ENCODE measurements at regions of chr10 and their contacts with region 1.

Region 1: DNA sequence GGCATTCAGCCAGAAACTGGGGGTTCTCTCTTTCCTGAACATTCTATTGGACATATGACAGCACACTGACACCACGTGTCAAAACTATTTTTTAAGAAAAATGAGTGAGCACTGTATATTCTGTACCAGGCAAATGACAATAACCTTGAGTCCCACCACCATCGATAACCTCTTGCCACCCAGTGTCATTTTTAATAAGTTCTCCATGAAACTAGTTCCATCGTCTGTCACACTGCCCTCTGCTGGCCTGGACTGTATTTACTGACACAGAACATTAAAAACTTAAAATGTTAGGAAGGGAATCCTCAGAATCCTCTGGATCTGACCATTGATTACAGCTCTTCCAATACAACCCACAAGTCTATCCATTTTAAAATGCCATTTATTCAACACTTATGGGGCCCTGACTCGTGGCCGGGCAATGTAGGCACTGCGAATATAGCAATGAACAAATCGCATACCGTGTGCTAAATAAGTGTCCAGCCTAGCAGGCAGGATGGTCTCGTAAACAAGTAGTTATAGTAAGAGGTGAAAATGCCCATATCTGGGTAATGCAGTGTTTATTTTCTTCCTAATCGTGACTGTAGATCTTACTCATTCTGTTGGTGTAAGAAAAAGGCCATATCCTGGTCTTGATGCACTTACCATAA is 35.9 kb upstream of the CACNB2 start:
- H3K4me3 Mint-ChIP-seq: no peak overlapping the region
- H3K27ac Mint-ChIP-seq: no peak overlapping the region
- H3K4me1 Mint-ChIP-seq: peaks cover 4% of the 10 kb centered on the region
- H3K27me3 Mint-ChIP-seq: no peaks in the 10 kb centered on the region

Region 2: GRCh38 chr10:18044976-18045720 is 59.2 kb before region 1 on chr10:
- intact Hi-C with region 1: no loop called
- H3K4me3 Mint-ChIP-seq: no peak overlapping the region
- H3K27ac Mint-ChIP-seq: no peak overlapping the region
- H3K4me1 Mint-ChIP-seq: no peaks in the 10 kb centered on the region
- H3K27me3 Mint-ChIP-seq: peaks cover 2% of the 10 kb centered on the region

Region 3: DNA sequence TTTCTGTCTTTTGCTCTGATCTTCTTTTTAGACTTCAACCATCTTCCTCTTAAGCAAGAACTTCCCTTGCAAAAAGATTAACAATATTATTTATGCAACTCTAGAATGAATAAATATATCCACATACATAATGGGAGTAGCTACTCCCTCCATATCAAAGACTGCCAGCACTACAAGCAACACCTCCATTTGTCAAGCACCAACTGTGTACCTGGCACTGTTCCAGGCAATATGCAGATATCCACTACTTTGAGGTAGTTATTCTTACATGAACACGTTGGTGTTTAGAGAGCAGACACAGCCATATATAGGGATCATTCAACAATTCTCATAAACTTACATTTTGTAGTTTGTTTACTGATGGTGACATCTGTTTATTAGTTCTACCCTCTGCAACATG is 47.8 kb before region 1 on chr10:
- intact Hi-C with region 1: no loop called
- H3K4me3 Mint-ChIP-seq: no peak overlapping the region
- H3K27ac Mint-ChIP-seq: no peak overlapping the region
- H3K4me1 Mint-ChIP-seq: peaks cover 17% of the 10 kb centered on the region
- H3K27me3 Mint-ChIP-seq: peaks cover 4% of the 10 kb centered on the region

Region 4: DNA sequence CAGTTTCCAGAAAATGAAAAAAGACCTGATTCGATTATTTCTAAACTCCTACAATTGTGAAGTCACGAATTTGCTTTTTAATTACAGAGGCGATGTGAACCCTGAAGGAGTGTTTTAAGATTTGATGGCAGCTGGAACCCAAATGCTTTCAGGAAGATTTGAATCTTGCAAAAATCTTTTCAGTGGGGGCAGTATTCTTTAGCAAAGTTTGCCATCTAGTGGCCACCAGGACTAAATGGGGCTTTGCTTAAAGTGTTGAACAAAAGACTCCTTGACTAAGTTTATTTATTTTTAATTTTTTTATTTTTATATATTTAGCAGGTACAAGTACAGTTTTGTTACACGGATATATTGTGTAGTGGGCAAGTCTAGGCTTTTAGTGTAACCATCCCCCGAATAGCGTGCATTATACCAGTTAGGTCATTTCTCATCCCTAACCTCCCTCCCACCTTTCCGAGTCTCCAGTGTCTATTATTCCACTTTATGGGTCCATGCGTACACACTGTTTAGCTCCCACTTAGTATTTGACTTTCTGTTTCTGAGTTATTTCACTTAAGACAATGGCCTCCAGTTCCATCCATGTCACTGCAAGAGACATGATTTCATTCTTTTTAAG is 134.6 kb after region 1 on chr10:
- intact Hi-C with region 1: loop called (anchors 10 kb)
- H3K4me3 Mint-ChIP-seq: no peak overlapping the region
- H3K27ac Mint-ChIP-seq: no peak overlapping the region
- H3K4me1 Mint-ChIP-seq: peaks cover 16% of the 10 kb centered on the region
- H3K27me3 Mint-ChIP-seq: peaks cover 6% of the 10 kb centered on the region

Region 5: DNA sequence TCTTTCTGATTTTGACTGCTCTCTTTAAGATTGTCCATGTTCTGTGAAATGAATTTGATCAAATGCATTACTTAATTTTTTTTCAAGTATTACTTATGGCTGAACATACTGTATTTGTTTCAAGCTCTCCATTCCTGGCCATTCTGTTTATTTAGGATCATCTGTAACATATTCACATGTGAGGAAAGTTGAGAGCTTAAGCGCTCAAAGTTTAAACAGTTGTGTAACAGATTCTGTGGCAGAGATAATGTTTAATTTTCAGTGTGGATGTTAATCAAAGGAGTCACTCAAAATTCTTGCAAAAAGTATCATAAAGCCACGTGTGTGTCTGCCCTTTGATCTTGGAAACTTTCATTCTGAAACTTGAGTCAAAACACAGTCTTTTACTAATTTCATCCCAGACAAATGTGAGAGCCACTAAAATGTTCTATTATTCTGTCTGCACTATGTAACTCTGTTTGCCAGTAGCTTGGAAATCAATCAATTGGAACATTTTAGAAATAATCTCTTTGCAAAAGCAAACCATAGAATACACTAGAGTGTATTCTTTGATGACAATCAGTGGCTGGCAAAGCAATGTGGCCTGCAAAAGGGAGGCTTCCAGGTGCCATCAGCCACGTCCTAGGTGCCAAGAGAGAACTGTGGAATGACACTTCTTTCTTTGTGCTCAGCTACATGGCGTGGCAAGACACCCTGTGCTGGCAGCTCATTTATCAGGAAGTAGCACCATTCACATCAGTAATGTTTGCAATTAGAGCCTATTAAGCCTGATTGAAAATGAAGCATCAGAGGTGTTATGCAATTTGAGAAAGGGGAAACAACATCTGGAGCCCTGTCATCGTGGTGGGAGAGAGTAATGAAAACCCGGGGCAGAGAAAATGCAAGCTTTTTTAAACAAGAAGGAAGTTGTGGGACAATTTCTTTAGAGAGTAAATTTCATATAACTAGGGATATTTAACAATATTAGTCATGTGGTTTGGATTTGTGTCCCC is 595.8 kb after region 1 on chr10:
- intact Hi-C with region 1: no loop called
- H3K4me3 Mint-ChIP-seq: no peak overlapping the region
- H3K27ac Mint-ChIP-seq: no peak overlapping the region
- H3K4me1 Mint-ChIP-seq: peaks cover 20% of the 10 kb centered on the region
- H3K27me3 Mint-ChIP-seq: no peaks in the 10 kb centered on the region